Dorsolateral prefrontal cortex (tissue), 120 donors: ENCODE measurements at regions of chr6 and their contacts with region 1.

Region 1: GRCh38 chr6:63802606-63803206 is 167.1 kb downstream of the PHF3 start:
- DNase-seq: no peak
- H3K4me3 ChIP-seq: peak overlapping the region in 4 of 59 donors; percentile 1 to 19 (median 4)
- H3K27ac ChIP-seq: peak overlapping the region in 53 of 59 donors; percentile 6 to 92 (median 71)
- H3K27me3 ChIP-seq: no peaks in the 10 kb centered on the region
- CTCF ChIP-seq: peak; percentile 50 to 85 (median 71)

Region 2: GRCh38 chr6:63352587-63353285 is 450.0 kb before region 1 on chr6:
- intact Hi-C with region 1: loop called (anchors 5 to 10 kb)
- DNase-seq: no peak
- H3K4me3 ChIP-seq: peak overlapping the region in 2 of 59 donors; percentile 21 to 34
- H3K27ac ChIP-seq: peak overlapping the region in 2 of 59 donors; percentile 43 to 53
- H3K27me3 ChIP-seq: no peaks in the 10 kb centered on the region
- CTCF ChIP-seq: peak in 53 of 56 donors; percentile 25 to 70 (median 51)

Region 3: DNA sequence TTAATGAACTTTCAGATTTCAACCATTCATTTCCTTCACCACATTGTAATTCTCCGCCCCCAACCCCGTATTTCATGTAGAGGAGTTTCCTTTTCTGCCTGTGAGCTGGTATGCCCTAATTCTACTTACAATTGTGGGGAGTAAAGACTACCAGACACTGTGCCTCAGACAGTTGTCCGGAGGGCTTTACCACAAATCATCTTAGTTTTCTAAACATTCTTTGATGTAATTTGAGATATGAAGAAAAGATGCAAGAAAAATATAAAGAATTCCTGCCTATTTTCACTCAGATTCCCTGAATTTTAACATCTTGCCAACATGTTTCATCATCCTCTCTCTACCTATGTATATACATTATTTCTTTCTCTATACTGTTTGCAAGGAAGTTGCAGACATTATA is 258.7 kb before region 1 on chr6:
- intact Hi-C with region 1: no loop called
- DNase-seq: no peak
- H3K4me3 ChIP-seq: no peak overlapping the region
- H3K27ac ChIP-seq: no peak overlapping the region
- H3K27me3 ChIP-seq: no peaks in the 10 kb centered on the region
- CTCF ChIP-seq: no peak

Region 4: DNA sequence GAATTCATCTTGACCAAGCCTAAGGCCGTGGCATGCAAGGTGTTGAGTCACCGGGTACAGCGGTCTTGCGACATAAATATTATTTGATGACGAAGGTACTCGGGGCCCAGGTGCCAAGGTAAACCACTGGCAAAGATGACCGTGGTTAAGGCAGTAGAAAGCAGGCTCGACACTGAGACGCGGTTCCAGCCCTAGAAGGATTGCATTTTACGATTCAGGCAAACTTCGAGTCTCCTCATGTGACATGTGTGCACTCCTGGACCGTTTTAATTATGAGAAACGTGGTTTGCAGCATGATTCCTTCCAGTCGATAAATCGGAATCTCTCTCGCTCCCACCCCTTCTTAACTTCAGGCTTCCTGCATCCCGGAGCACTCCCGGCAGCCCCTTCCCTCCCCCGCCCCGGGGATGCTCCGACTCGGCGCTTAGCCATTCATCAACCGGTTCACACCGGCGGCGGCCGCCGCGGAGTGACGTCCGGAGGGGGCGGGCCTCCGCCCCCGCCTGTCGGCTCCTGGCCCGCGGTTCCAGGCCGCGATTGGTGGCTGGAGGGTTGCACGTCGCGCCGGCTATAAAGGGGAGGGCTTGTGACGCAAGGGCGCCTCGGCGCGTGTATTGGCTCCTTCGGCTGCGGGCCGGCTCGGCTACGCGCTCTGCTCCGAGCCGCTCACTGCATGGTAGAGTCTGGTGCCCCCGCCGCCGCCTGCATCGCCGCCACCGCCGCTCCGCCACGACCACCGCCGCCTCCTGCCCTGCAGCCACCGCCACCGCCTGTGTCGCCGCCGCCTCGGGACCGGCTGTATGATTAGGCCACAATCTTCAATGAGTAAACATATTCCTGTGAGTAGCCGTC is 230.6 kb before region 1 on chr6 and contains the starts of genes LOC128125822 and PTP4A1:
- intact Hi-C with region 1: loop called in 1 of 2 experiments (anchors 5 kb)
- DNase-seq: peak; percentile 98 to 99 (median 98)
- H3K4me3 ChIP-seq: peak within 1 kb of the TSS; percentile 65 to 100 (median 90)
- H3K27ac ChIP-seq: peak within 1 kb of the TSS; percentile 79 to 100 (median 98)
- H3K27me3 ChIP-seq: no peaks in the 10 kb centered on the region
- CTCF ChIP-seq: peak in 10 of 56 donors; percentile 5 to 33 (median 15)
- total RNA-seq, gene PTP4A1: 17.6 to 85.2 (median 40.6) TPM

Region 5: GRCh38 chr6:63598049-63599036 is 204.4 kb before region 1 on chr6:
- intact Hi-C with region 1: loop called in 1 of 2 experiments (anchors 10 kb)
- DNase-seq: peak; percentile 48 to 80 (median 69)
- H3K4me3 ChIP-seq: peak overlapping the region; percentile 46 to 85 (median 66)
- H3K27ac ChIP-seq: peak overlapping the region in 58 of 59 donors; percentile 5 to 85 (median 68)
- H3K27me3 ChIP-seq: no peaks in the 10 kb centered on the region
- CTCF ChIP-seq: peak; percentile 45 to 93 (median 86)

Region 6: GRCh38 chr6:63764318-63764916 is 38.3 kb before region 1 on chr6:
- intact Hi-C with region 1: loop called in 1 of 2 experiments (anchors 5 kb)
- DNase-seq: no peak
- H3K4me3 ChIP-seq: no peak overlapping the region
- H3K27ac ChIP-seq: no peak overlapping the region
- H3K27me3 ChIP-seq: no peaks in the 10 kb centered on the region
- CTCF ChIP-seq: peak; percentile 55 to 94 (median 82)

Region 7: GRCh38 chr6:64270083-64270482 is 467.4 kb after region 1 on chr6:
- intact Hi-C with region 1: no loop called
- DNase-seq: no peak
- H3K4me3 ChIP-seq: no peak overlapping the region
- H3K27ac ChIP-seq: no peak overlapping the region
- H3K27me3 ChIP-seq: no peaks in the 10 kb centered on the region
- CTCF ChIP-seq: no peak